ENCODE measurements at regions of chr17 and their contacts with region 1.

Region 1: DNA sequence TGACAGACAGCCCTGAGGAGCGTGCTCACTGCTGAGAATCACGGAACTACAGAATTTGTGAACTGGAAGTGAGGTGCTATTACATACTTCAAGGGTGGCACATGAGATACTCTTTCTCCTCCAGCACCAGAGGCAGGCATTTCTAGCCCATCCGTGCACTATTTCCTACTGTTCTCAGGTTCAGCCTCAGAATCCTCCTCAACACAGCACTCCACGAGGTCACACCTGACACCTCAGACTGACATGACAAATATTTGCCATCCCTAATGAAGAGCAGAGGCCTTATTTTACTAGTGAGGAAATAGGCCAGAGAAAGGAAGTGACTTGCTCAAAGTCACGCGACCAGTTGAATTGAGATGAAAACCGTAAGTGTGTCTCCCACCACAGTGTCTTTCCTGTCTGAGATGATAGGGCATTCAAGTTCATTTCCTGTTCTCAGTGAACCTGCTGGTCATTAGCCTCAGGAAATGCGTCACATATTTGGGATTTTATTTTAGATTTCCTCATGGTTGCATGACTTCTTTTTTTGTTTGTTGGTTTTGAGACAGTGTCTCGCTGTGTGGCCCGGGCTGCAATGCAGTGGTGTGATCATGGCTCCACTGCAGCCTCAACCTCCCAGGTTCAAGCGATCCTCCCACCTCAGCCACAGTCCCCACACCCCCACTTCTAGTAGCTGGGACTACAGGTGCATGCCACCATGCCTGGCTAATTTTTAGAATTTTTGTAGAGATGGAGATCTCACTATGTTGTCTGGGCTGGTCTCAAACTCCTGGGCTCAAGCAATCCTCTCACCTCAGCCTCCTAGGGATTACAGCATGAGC is 23.5 kb downstream of the SEZ6 start:
- DNase-seq: peak in 1 of 4 donors; percentile 64
- ATAC-seq: no peak
- H3K4me3 ChIP-seq: no peak overlapping the region
- H3K27ac ChIP-seq: peak overlapping the region in 1 of 4 donors; percentile 69
- H3K4me1 ChIP-seq: no peaks in the 10 kb centered on the region
- H3K27me3 ChIP-seq: no peaks in the 10 kb centered on the region
- CTCF ChIP-seq: no peak
- POLR2A ChIP-seq: no peak

Region 2: GRCh38 chr17:28763804-28764266 is 218.5 kb before region 1 on chr17:
- intact Hi-C with region 1: no loop called
- DNase-seq: peak; percentile 84 to 92 (median 86)
- ATAC-seq: peak; percentile 70
- H3K4me3 ChIP-seq: no peak overlapping the region
- H3K27ac ChIP-seq: no peak overlapping the region
- H3K4me1 ChIP-seq: peaks cover 16% of the 10 kb centered on the region
- H3K27me3 ChIP-seq: no peaks in the 10 kb centered on the region
- CTCF ChIP-seq: peak; percentile 62 to 90 (median 83)
- POLR2A ChIP-seq: no peak

Region 3: DNA sequence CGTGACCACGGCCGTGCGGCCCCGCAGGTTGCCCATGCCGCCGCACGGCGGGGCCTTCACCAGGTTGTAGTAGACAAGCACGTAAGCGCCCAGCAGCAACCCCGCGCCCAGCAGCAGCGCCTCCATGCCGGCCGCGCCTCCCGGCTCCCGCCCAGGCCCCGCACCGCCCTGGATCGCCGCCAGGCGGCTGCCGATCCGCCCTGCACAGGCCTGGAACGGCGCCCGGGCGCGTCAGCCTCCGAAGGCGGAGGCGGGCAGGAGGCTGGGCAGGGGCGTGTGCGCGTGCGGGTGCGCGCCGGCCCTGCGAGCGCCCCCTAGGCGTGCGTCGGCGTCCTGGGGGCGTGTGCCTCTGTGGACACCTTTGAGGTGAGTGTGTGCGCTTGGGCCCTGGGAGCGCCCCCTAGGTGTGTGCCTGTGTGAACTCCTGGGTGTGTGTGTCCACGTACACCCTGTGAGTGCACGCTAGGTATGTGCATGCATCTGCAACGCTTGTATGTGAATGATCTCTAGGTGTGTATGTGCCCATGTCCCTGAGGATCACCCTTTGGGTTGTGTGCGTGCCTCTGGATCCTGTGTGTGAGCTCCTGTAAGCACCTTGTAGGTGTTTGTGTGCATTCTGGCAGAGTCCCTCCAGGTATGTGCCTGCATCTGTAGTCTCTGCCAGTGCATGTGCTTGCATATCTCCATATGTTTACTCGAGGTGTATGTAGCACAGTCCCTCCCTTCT is 79.4 kb before region 1 on chr17 and contains the start of gene DHRS13:
- intact Hi-C with region 1: no loop called
- DNase-seq: peak; percentile 92 to 97 (median 94)
- ATAC-seq: peak; percentile 93
- H3K4me3 ChIP-seq: peak within 1 kb of the TSS; percentile 47 to 54
- H3K27ac ChIP-seq: peak within 1 kb of the TSS; percentile 13 to 87 (median 85)
- H3K4me1 ChIP-seq: peaks cover 31% of the 10 kb centered on the region
- H3K27me3 ChIP-seq: no peaks in the 10 kb centered on the region
- CTCF ChIP-seq: peak; percentile 75 to 99 (median 93)
- POLR2A ChIP-seq: no peak
- total RNA-seq, gene DHRS13: 7.3 to 9.9 TPM

Region 4: GRCh38 chr17:29237476-29238132 is 255.3 kb after region 1 on chr17:
- intact Hi-C with region 1: loop called (anchors 10 kb)
- DNase-seq: no peak
- ATAC-seq: no peak
- H3K4me3 ChIP-seq: no peak overlapping the region
- H3K27ac ChIP-seq: no peak overlapping the region
- H3K4me1 ChIP-seq: no peaks in the 10 kb centered on the region
- H3K27me3 ChIP-seq: no peaks in the 10 kb centered on the region
- CTCF ChIP-seq: no peak
- POLR2A ChIP-seq: no peak